ENCODE measurements at regions of chr3 and their contacts with region 1.

Region 1: DNA sequence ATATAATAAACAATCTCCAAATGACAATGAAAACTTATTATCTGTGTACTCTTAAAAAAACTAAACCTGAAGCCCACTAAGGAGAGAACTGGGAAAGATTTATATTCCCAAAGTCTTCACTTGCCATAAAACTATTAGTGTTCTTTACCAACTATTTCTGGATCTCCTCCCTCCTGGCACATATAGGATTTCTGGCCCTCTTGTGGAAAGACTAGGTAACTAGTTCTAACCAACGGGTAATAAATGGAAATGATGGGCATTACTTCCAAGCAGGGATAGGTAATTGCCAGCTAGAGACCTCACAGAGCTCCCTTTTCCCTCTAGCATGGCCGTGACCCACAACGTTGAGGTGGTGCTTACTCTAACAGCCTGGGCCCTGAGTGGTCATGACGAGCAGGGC is 110.1 kb downstream of the DNAH12 start:
- DNase-seq: no peak
- ATAC-seq: no peak
- H3K4me3 ChIP-seq: no peak overlapping the region
- H3K27ac ChIP-seq: no peak overlapping the region
- H3K4me1 ChIP-seq: no peaks in the 10 kb centered on the region
- H3K27me3 ChIP-seq: no peaks in the 10 kb centered on the region
- CTCF ChIP-seq: peak in 3 of 5 experiments; percentile 36 to 49 (median 39)
- POLR2A ChIP-seq: no peak

Region 2: DNA sequence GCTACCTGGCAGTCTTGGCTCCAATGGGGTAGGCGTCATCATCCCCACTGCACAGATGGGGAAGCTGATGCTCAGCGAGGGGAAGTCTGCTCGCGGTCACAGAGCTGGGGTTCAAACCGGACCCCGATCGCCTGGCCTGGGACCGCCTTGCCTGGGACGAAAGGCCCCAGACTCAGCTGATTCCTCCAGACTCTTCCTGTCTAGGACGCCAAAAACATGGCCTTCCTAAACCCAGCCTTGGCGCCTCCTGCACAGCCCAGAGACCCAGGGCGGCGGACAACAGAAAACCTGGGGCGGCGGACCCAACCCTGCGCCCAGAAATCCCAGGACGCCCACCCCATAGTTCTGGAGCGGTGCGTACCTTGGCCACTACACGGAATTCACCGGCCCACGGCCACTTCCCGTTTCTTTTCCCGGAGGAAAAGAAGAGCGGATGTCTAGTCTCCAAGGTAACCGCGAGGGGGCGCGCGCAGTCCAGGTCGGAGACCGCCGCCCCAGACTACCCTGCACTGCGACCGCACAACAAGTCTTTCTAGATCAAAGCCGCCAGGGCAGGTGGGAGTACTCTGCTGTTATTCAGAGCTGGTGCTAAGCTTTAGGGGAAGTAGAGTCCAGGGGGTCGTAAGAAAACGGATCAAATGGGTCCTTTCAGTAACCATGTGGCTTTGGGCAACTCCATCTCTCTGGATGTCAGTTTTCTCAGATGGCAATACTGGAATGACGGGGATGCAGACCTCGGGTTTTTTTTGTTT is 264.0 kb before region 1 on chr3:
- in situ Hi-C with region 1: loop called in 2 of 4 experiments (anchors 10 to 25 kb)
- intact Hi-C with region 1: loop called (anchors 5 kb)
- DNase-seq: peak; percentile 40 to 56
- ATAC-seq: peak; percentile 70 to 85
- H3K4me3 ChIP-seq: peak overlapping the region; percentile 49 to 56 (median 52)
- H3K27ac ChIP-seq: no peak overlapping the region
- H3K4me1 ChIP-seq: no peaks in the 10 kb centered on the region
- H3K27me3 ChIP-seq: no peaks in the 10 kb centered on the region
- CTCF ChIP-seq: peak; percentile 47 to 90 (median 83)
- POLR2A ChIP-seq: no peak

Region 3: GRCh38 chr3:58630076-58630709 is 1196.2 kb after region 1 on chr3:
- in situ Hi-C with region 1: no loop called
- intact Hi-C with region 1: no loop called
- DNase-seq: peak; percentile 30 to 36
- ATAC-seq: peak; percentile 50 to 58
- H3K4me3 ChIP-seq: no peak overlapping the region
- H3K27ac ChIP-seq: peak overlapping the region in 3 of 4 donors; percentile 45 to 57 (median 46)
- H3K4me1 ChIP-seq: peaks cover 26 to 33% of the 10 kb centered on the region in 2 donors
- H3K27me3 ChIP-seq: no peaks in the 10 kb centered on the region
- CTCF ChIP-seq: peak; percentile 80 to 96 (median 91)
- POLR2A ChIP-seq: no peak